ENCODE measurements at regions of chr7 and their contacts with region 1.

Region 1: DNA sequence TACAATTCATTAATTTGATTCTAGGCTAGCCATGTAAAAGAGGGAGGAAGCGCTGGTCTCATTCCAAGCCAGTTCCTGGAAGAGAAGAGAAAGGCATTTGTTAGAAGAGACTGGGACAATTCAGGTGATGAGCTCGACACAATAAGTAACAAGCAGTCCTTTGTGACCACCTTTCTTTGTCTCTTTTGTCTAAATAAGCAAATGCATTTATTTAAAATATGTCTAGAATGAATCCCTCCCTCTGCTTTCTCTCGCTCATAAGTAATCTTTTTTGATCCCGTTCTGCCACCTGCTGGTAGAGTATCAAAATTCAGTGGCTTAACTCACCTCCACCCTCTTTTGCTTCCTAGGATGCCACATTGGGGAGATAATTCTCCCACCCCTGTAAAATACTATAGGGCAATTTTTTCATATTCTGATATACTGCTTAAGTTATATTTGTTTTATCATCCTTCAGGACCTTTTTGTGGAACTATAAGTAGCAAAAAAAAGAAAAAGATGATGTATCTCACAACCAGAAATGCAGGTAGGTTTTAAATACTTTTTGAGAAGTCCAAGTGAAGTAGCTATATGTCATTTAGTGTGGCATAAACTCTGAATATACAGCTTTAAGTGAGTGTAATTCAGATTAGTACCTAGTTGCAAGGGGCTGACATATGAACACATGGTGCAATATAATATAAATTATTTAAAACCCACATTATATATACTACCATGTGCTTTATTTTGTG is 91.5 kb downstream of the GSDME start:
- DNase-seq: peak; percentile 39 to 48
- H3K4me3 ChIP-seq: no peak overlapping the region
- H3K27ac ChIP-seq: no peak overlapping the region
- H3K4me1 ChIP-seq: peaks cover 21% of the 10 kb centered on the region
- H3K27me3 ChIP-seq: no peaks in the 10 kb centered on the region
- CTCF ChIP-seq: peak; percentile 97

Region 2: DNA sequence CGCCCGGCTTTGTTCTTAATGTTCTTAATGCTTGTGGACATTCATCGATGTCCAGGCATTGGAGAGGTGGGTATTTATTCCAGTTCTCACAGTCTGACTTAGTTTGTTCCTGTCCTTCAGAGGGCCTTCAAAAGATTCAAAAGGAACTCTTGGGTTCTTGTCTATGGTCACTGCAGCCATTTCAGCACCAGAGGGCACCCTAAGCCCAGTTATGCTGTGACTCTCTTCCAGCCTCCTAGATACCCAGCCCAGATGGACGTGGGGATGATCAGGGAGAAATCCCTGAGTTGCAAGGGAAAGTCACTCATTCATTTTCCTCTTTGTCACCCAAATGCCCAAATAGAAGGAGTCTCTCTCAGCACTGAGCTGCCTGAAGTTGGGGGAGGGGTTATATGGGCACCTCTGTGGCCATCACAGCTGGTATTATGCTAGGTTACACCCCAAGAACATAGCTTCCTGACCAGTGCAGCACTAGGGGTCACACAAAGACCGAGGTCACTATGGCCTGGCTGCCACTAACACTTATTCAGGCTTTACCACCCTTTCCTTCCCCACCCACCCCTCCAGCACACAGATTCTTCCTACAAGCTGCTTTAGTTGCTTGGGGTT is 1095.0 kb before region 1 on chr7:
- CTCF ChIA-PET with region 1: no interaction called
- POLR2A ChIA-PET with region 1: no interaction called
- intact Hi-C with region 1: loop called (anchors 1 kb)
- DNase-seq: peak; percentile 77 to 81
- H3K4me3 ChIP-seq: no peak overlapping the region
- H3K27ac ChIP-seq: no peak overlapping the region
- H3K4me1 ChIP-seq: no peaks in the 10 kb centered on the region
- H3K27me3 ChIP-seq: no peaks in the 10 kb centered on the region
- CTCF ChIP-seq: peak; percentile 96

Region 3: DNA sequence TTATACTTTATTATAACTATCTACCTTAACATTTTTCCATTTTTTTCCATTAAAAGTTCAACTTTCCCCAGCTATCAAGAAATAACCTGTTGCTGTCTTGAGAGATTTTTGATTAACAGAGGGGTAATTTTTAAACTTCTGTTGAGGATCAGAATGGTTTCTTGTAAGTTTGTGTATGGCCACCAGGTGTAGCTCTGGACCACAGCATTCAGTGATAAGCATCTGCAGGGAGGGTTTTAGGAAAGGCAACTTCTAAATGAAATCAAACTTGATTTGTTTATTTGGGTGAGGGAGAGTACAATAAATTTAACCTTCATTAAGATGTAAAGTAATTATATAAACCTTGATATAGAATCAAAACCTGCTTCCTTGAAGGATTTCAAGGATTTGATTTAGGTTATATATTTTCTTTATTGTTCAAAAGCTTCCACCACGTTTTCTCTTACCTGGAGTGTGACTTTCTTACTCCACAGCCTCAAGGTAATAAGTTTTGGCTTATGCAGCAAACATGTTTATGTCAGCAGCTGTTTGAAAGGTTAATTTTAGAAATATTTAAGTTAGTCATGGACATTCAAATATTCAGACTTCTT is 802.4 kb before region 1 on chr7:
- CTCF ChIA-PET with region 1: no interaction called
- POLR2A ChIA-PET with region 1: no interaction called
- intact Hi-C with region 1: loop called (anchors 5 kb)
- DNase-seq: peak in 1 of 2 experiments; percentile 51
- H3K4me3 ChIP-seq: no peak overlapping the region
- H3K27ac ChIP-seq: no peak overlapping the region
- H3K4me1 ChIP-seq: peaks cover 22% of the 10 kb centered on the region
- H3K27me3 ChIP-seq: no peaks in the 10 kb centered on the region
- CTCF ChIP-seq: peak; percentile 98

Region 4: DNA sequence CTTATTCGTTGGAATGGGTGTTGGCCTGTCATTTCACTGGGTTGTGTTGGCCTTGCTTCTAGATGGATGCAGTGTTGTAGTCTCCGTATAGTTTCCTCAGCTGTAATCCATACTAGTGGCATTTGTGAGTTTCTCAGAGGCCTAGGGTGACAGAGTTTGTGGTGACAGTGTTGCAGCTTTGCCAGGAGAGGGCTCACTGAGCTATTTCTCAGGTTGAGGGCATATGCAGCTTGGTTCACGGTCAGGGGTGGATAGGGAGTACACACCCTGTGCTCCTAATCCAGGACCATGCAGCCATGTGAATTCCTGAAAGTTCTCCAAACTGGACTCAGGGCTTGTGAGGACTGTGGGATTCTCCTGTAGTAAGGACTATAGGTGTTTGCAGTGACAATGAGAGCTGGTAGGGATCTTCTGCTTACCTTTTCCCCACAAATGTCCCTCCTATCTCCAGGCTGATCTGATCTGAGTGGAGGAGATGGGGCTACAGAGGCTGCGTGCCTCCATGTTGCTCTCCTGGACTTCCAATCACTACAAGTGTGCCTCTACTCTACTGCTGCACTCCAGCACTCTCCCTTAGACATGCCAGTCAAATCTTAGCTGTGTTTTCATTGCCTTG is 726.7 kb before region 1 on chr7:
- CTCF ChIA-PET with region 1: no interaction called
- POLR2A ChIA-PET with region 1: no interaction called
- intact Hi-C with region 1: loop called (anchors 5 kb)
- DNase-seq: peak; percentile 25 to 60
- H3K4me3 ChIP-seq: no peak overlapping the region
- H3K27ac ChIP-seq: no peak overlapping the region
- H3K4me1 ChIP-seq: peaks cover 10% of the 10 kb centered on the region; the same call in 1 of the 2 replicates
- H3K27me3 ChIP-seq: no peaks in the 10 kb centered on the region
- CTCF ChIP-seq: peak; percentile 78

Region 5: DNA sequence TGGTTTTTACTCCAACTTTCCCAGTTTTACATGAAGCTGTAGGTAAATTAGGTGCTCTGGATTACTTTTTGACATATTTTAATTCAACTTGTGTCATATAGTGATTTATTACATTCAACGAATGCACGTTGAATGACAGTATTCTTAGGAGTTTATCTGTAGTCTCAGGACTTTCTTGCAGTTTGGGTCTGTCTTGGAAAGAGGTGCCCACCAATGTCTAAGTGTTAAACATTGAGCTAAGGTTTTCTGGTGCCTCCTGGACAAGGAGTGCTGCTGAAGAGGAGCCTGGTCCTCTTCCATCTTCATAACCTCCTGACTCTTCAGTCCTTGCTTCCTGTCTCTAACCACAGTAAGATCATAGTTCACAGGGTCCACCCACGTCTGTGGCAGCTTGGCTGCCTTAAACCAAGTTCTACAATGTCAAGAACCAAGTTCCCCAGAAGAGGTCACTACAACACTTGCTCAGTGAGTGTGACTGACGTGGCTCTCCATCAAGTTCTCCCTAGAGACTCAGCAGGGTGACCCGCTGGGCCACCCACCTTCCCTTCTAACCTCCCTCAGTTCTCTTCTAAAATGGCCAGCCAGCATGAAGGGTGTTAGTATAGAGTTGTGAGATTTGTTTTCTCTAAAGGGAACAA is 375.6 kb before region 1 on chr7:
- CTCF ChIA-PET with region 1: interaction called, 3 read pairs
- POLR2A ChIA-PET with region 1: no interaction called
- intact Hi-C with region 1: loop called (anchors 1 kb)
- DNase-seq: peak; percentile 20 to 81
- H3K4me3 ChIP-seq: no peak overlapping the region
- H3K27ac ChIP-seq: no peak overlapping the region
- H3K4me1 ChIP-seq: peaks cover 26% of the 10 kb centered on the region
- H3K27me3 ChIP-seq: no peaks in the 10 kb centered on the region
- CTCF ChIP-seq: peak; percentile 82

Region 6: DNA sequence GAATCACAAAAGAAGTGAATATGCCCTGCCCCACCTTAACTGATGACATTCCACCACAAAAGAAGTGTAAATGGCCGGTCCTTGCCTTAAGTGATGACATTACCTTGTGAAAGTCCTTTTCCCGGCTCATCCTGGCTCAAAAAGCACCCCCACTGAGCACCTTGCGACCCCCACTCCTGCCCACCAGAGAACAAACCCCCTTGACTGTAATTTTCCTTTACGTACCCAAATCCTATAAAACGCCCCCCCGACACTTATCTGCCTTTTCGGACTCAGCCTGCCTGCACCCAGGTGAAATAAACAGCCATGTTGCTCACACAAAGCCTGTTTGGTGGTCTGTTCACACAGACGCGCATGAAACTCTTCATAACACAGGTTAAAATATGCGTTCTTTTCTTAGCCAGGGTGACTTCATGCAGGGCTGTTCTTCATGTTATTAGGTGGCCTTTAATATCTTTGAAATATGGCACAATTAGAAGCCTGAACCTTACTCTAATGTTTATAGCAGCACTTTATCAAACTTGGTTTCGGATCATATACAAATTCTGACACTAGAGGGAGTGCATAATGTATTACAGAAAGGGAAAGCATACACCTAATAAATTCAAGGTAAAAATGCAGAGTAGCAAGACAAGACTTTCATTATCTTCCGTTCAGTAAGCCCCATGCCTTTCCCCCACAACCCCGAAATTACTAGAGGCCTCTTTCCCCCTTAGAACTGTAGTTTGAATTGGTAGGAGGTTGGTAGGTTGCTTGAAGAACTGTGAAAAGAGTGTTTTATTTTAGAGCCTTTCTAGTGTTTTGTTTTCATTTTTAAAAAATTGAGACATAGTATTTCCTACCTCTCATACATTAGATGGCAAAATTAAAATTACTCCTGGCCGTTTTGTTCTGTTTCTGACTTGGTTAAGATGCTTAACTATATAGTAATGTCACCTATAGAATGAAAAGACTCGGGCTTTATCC is 263.8 kb before region 1 on chr7:
- CTCF ChIA-PET with region 1: no interaction called
- POLR2A ChIA-PET with region 1: no interaction called
- intact Hi-C with region 1: loop called (anchors 1 kb)
- DNase-seq: peak in 1 of 2 experiments; percentile 60
- H3K4me3 ChIP-seq: peak overlapping the region; percentile 50; the same call in 1 of the 2 replicates
- H3K27ac ChIP-seq: no peak overlapping the region
- H3K4me1 ChIP-seq: 0 out of 2 replicates have a peak, but pooled peaks cover 4% of the 10 kb centered on the region
- H3K27me3 ChIP-seq: no peaks in the 10 kb centered on the region
- CTCF ChIP-seq: peak; percentile 82

Region 7: DNA sequence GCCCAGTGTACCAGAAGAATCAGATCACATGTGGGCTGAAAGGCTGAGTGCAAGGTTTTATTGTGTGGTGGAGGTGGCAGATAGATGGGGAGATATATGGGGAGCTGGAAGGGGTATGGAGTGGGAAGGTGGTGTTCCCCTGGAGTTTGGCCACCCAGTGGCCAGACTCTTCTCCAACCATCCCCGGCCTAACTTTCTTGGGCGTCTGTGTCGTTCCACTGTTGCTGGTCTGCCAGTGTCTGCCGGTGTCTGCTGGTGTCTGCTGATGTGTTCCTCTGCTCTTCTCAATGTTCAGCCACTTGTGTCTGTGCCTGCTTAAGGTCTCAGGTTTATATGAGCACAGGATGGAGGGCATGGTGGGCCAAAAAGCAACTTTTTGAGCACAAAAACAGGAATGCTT is 170.9 kb before region 1 on chr7:
- CTCF ChIA-PET with region 1: no interaction called
- POLR2A ChIA-PET with region 1: no interaction called
- intact Hi-C with region 1: loop called (anchors 5 kb)
- DNase-seq: no peak
- H3K4me3 ChIP-seq: no peak overlapping the region
- H3K27ac ChIP-seq: no peak overlapping the region
- H3K4me1 ChIP-seq: no peaks in the 10 kb centered on the region
- H3K27me3 ChIP-seq: no peaks in the 10 kb centered on the region
- CTCF ChIP-seq: no peak

Region 8: GRCh38 chr7:25347360-25348066 is 681.8 kb after region 1 on chr7:
- CTCF ChIA-PET with region 1: no interaction called
- POLR2A ChIA-PET with region 1: no interaction called
- intact Hi-C with region 1: no loop called
- DNase-seq: no peak
- H3K4me3 ChIP-seq: no peak overlapping the region
- H3K27ac ChIP-seq: no peak overlapping the region
- H3K4me1 ChIP-seq: no peaks in the 10 kb centered on the region
- H3K27me3 ChIP-seq: peaks cover 49% of the 10 kb centered on the region
- CTCF ChIP-seq: no peak